AG04450 (cell line): ENCODE measurements at regions of chr20 and their contacts with region 1.

Region 1: GRCh38 chr20:1503564-1504227 is 12.5 kb upstream of the SIRPB2 start:
- DNase-seq: peak; percentile 75
- H3K4me3 ChIP-seq: no peak overlapping the region
- H3K27ac ChIP-seq: no peak overlapping the region
- H3K27me3 ChIP-seq: peaks cover 11% of the 10 kb centered on the region
- CTCF ChIP-seq: peak; percentile 100

Region 2: DNA sequence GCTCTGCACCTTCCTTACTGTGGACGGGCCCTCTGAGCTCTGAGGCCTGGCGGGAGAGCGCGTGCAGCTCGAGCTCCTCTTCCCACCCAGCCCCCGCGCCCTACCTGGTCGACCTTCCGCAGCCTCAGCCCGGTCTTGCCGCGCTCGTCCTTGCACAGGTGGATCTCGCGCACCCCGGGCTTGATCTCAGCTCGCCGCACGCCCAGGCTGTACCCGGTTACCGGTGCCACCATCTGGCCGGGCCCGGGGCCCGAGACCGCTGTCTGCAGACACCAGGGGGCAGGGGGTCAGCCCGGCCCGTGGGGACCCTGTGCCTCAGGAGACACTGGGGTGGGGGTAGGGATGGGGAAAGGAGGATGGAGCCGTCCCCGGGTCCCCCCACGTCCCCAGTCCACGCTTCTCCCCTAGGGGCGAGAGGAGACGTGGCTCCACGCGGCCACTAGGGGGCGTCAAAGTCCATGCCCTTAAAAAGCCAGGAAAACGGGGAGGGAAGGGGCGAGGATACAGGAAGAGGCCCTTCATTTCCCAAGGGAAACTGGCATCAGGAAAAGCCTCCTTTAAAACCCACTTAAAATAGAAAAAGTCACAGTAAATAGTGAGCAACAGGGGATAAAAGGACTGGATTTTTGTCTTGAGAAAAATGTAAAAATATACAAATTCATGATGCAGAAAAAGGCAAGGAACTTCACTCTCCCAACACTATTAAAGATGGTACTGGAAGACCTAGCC is 190.3 kb before region 1 on chr20:
- CTCF ChIA-PET with region 1: interaction called, 25 read pairs
- POLR2A ChIA-PET with region 1: no interaction called
- DNase-seq: no peak
- H3K4me3 ChIP-seq: peak overlapping the region; percentile 45; the same call in 1 of the 2 replicates
- H3K27ac ChIP-seq: no peak overlapping the region
- H3K27me3 ChIP-seq: no peaks in the 10 kb centered on the region
- CTCF ChIP-seq: peak; percentile 95

Region 3: DNA sequence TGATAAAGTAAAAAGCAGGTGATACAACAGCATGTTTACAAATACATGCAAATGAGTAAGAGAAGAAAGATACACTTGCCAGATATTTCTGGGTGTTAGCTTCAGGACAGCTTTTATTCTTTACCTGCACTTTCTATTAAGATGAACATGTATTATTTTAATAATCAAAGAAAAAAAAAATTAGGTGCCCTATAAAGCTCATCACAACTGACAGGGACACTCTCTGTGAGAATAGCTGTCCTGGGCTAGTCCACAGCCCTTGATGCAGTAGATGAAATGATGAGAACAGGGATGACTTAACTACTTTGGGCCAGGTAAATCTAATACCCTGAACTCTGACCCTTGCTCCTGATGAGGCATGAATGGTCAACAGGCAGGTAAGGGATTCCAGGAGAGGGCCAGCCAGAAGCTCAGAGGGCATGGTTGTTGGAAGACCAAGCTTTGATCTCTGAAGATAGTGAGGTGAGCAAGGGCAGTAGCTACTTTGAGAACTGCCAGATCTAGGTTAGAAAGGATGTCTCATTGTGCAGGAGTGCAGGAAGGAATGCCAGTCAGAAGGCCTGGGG is 52.7 kb before region 1 on chr20:
- CTCF ChIA-PET with region 1: interaction called, 15 read pairs
- POLR2A ChIA-PET with region 1: no interaction called
- DNase-seq: no peak
- H3K4me3 ChIP-seq: no peak overlapping the region
- H3K27ac ChIP-seq: no peak overlapping the region
- H3K27me3 ChIP-seq: no peaks in the 10 kb centered on the region
- CTCF ChIP-seq: no peak

Region 4: DNA sequence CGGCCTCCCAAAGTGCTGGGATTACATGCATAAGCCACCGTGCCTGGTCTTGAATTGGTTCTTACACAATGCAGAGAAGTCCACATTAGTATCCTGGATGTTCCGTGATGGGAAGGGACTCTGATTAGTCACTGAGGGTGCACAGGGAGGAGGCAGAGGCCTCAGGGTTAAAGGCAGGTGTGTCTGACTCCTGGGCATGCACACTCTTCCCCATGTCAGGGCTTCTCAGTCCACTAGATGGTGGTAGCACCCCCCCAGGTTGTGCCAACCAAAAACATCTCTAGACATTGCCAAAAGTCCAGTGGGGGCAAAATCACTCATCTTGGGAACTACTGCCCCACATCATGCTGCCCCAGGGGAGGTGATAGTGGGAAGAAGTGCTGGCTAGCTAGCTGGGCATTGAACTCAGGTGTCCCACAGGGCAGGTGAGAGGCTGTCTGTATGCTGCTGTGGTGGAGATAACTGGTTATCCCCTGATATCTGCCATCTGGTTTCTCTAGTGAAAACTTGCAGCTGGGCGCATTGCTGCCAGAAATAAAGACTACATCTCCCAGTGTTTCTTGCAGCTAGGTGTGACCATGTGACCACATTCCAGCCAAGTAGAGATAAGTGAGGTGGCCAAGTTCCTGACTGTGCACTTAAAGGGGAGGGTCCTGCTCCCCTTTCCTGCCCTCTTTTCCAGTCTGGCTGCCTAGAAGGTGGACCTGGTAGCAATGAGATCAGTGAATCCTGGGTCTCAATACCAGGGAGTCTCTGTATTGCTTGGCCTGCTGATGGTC is 28.7 kb before region 1 on chr20:
- CTCF ChIA-PET with region 1: interaction called, 50 read pairs
- POLR2A ChIA-PET with region 1: no interaction called
- DNase-seq: no peak
- H3K4me3 ChIP-seq: no peak overlapping the region
- H3K27ac ChIP-seq: no peak overlapping the region
- H3K27me3 ChIP-seq: no peaks in the 10 kb centered on the region
- CTCF ChIP-seq: no peak

Region 5: DNA sequence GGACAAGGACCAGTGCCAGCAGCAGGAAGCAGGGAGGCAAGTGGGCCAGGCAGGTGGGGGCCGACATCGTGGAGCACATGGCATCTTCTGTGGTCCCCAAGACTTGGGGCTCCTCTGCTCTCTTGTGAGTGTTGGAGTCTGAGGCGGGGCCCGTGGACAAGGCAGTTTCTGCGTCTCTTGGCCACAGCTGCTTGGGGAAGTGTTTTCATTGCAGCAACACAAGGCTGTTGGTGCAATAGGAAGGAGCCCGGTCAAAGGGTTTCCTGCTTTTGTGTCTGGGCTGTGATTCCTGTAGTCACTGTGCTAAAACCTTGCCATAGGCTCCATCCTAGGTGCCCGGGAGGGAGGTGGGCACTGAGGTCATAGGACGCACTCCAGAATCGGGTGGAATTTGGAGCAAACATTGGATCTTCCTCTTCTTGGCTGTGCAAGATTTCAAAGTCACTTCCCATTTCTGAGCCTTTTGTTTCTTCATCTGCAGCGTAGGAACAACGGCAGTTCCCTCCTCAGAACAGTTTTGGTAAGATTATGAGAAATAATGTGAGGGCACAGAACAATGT is 12.3 kb before region 1 on chr20 and contains the start of gene SIRPB2:
- CTCF ChIA-PET with region 1: interaction called, 29 read pairs
- POLR2A ChIA-PET with region 1: no interaction called
- DNase-seq: no peak
- H3K4me3 ChIP-seq: no peak within 1 kb of the TSS
- H3K27ac ChIP-seq: no peak within 1 kb of the TSS
- H3K27me3 ChIP-seq: peaks cover 24% of the 10 kb centered on the region
- CTCF ChIP-seq: no peak
- polyA plus RNA-seq, gene SIRPB2: not detected in 2 replicates

Region 6: DNA sequence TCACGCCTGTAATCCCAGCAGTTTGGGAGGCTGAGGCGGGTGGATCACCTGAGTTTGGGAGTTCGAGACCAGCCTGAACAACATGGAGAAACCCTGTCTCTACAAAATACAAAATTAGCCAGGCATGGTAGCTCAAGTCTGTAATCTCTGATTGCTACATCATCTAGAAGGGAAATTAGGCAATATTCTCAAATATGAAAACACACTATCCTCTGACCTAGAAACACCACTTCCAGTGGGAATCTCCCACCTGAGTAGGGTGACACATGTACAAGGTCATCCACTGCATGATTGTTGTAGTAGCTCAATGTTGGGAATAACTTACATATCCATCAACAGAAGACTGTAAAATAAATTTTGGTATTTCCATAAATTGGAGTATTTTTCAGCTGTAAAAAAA is 72.9 kb after region 1 on chr20:
- CTCF ChIA-PET with region 1: no interaction called
- POLR2A ChIA-PET with region 1: no interaction called
- DNase-seq: no peak
- H3K4me3 ChIP-seq: no peak overlapping the region
- H3K27ac ChIP-seq: no peak overlapping the region
- H3K27me3 ChIP-seq: no peaks in the 10 kb centered on the region
- CTCF ChIP-seq: no peak